Activated naive CD4-positive, alpha-beta T cell treated with anti-CD3 and anti-CD28 coated beads for 36 hours (primary cell): ENCODE measurements at regions of chr9 and their contacts with region 1.

Region 1: DNA sequence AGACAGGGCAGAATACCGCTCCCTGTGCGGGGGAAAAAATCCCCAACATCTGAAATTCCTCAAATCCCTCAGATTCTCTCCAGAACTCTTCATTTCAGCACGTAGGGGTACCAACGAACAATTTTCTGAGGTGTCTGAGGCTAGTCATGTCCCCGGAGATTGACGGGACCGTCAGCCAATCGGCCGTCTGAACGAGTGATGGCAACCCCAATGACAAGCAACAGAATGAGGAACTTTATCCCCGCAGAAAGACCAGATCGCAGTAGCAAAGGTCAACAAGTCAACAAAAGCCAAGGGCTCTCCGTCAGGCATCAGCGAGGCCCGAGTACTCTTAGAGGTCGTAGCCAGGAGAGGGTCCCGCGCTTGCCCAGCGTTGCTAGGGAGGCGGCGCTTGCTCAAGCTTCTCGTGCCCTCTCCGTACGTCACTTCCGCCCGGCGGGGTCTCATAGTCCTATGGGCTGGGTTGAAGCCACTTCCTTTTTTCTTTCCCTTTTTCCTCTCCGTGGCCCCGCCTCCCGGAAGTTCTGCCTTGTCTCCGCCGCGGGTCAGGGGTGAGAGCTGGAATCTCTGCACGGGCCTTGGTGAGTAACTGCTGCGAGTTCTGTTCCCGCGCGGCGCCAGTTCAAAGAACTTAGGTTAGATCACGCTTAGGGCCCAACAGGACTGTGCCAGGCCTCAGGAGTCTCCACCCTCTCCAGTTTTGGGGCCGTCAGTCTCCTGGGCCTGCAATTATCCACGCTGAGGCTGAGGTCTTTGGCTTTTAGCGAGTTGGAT is at the start of gene RNF20:
- DNase-seq: peak; percentile 100
- H3K4me3 Mint-ChIP-seq: peak within 1 kb of the TSS; percentile 79
- H3K27ac Mint-ChIP-seq: peak within 1 kb of the TSS; percentile 93
- H3K4me1 Mint-ChIP-seq: peaks cover 14% of the 10 kb centered on the region
- H3K27me3 Mint-ChIP-seq: peaks cover 5% of the 10 kb centered on the region
- total RNA-seq, gene RNF20: 42.0 to 45.9 TPM

Region 2: GRCh38 chr9:100352727-100353505 is 1180.6 kb before region 1 on chr9 and contains the start of gene TEX10:
- CTCF ChIA-PET with region 1: no interaction called
- intact Hi-C with region 1: loop called (anchors 10 kb)
- DNase-seq: peak; percentile 91
- H3K4me3 Mint-ChIP-seq: peak within 1 kb of the TSS; percentile 85
- H3K27ac Mint-ChIP-seq: peak within 1 kb of the TSS; percentile 74
- H3K4me1 Mint-ChIP-seq: peaks cover 33% of the 10 kb centered on the region
- H3K27me3 Mint-ChIP-seq: no peaks in the 10 kb centered on the region
- total RNA-seq, gene TEX10: 17.3 to 17.9 TPM

Region 3: GRCh38 chr9:100714372-100715099 is 819.0 kb before region 1 on chr9:
- CTCF ChIA-PET with region 1: no interaction called
- intact Hi-C with region 1: loop called (anchors 5 kb)
- DNase-seq: peak; percentile 71
- H3K4me3 Mint-ChIP-seq: no peak overlapping the region
- H3K27ac Mint-ChIP-seq: no peak overlapping the region
- H3K4me1 Mint-ChIP-seq: no peaks in the 10 kb centered on the region
- H3K27me3 Mint-ChIP-seq: peaks cover 7% of the 10 kb centered on the region

Region 4: GRCh38 chr9:101398068-101398929 is 135.2 kb before region 1 on chr9 and contains the starts of genes MRPL50 and ZNF189:
- CTCF ChIA-PET with region 1: interaction called, 3 read pairs
- intact Hi-C with region 1: loop called (anchors 1 kb)
- DNase-seq: peak; percentile 99
- H3K4me3 Mint-ChIP-seq: peak within 1 kb of the TSS; percentile 92
- H3K27ac Mint-ChIP-seq: peak within 1 kb of the TSS; percentile 97
- H3K4me1 Mint-ChIP-seq: peaks cover 66% of the 10 kb centered on the region
- H3K27me3 Mint-ChIP-seq: no peaks in the 10 kb centered on the region
- total RNA-seq, gene MRPL50: 13.2 to 14.3 TPM
- total RNA-seq, gene ZNF189: 5.5 to 5.7 TPM

Region 5: GRCh38 chr9:101458955-101459631 is 74.4 kb before region 1 on chr9:
- CTCF ChIA-PET with region 1: interaction called, 38 read pairs
- intact Hi-C with region 1: loop called (anchors 1 kb)
- DNase-seq: peak; percentile 21
- H3K4me3 Mint-ChIP-seq: no peak overlapping the region
- H3K27ac Mint-ChIP-seq: no peak overlapping the region
- H3K4me1 Mint-ChIP-seq: no peaks in the 10 kb centered on the region
- H3K27me3 Mint-ChIP-seq: peaks cover 9% of the 10 kb centered on the region

Region 6: GRCh38 chr9:101566904-101567724 is 33.6 kb after region 1 on chr9:
- CTCF ChIA-PET with region 1: interaction called, 4 read pairs
- intact Hi-C with region 1: loop called (anchors 1 kb)
- DNase-seq: peak; percentile 80
- H3K4me3 Mint-ChIP-seq: no peak overlapping the region
- H3K27ac Mint-ChIP-seq: peak overlapping the region; percentile 59
- H3K4me1 Mint-ChIP-seq: peaks cover 53% of the 10 kb centered on the region
- H3K27me3 Mint-ChIP-seq: no peaks in the 10 kb centered on the region

Region 7: GRCh38 chr9:102309379-102309778 is 775.9 kb after region 1 on chr9:
- CTCF ChIA-PET with region 1: no interaction called
- intact Hi-C with region 1: no loop called
- DNase-seq: no peak
- H3K4me3 Mint-ChIP-seq: no peak overlapping the region
- H3K27ac Mint-ChIP-seq: no peak overlapping the region
- H3K4me1 Mint-ChIP-seq: no peaks in the 10 kb centered on the region
- H3K27me3 Mint-ChIP-seq: no peaks in the 10 kb centered on the region